CD8-positive, alpha-beta T cell (primary cell): ENCODE measurements at regions of chr1 and their contacts with region 1.

Region 1: GRCh38 chr1:109620841-109621286 is 1.2 kb downstream of the AMPD2 start:
- DNase-seq: peak; percentile 91 to 99 (median 97)
- ATAC-seq: peak; percentile 87
- H3K4me3 ChIP-seq: peak overlapping the region; percentile 90 to 92
- H3K4me3 Mint-ChIP-seq: peak overlapping the region; percentile 98
- H3K27ac ChIP-seq: peak overlapping the region; percentile 86 to 91
- H3K27ac Mint-ChIP-seq: peak overlapping the region; percentile 97
- H3K4me1 ChIP-seq: peaks cover 50% of the 10 kb centered on the region
- H3K4me1 Mint-ChIP-seq: peaks cover 64% of the 10 kb centered on the region
- H3K27me3 ChIP-seq: no peaks in the 10 kb centered on the region
- H3K27me3 Mint-ChIP-seq: no peaks in the 10 kb centered on the region
- CTCF ChIP-seq: no peak

Region 2: GRCh38 chr1:109493805-109494539 is 126.9 kb before region 1 on chr1 and contains the start of gene CYB561D1:
- CTCF ChIA-PET with region 1: interaction called, 6 read pairs
- POLR2A ChIA-PET with region 1: no interaction called
- intact Hi-C with region 1: loop called (anchors 5 kb)
- DNase-seq: peak; percentile 79 to 95 (median 88)
- ATAC-seq: peak; percentile 90
- H3K4me3 ChIP-seq: peak within 1 kb of the TSS; percentile 94 to 95
- H3K4me3 Mint-ChIP-seq: peak within 1 kb of the TSS; percentile 95
- H3K27ac ChIP-seq: peak within 1 kb of the TSS; percentile 53 to 58
- H3K27ac Mint-ChIP-seq: peak within 1 kb of the TSS; percentile 85
- H3K4me1 ChIP-seq: peaks cover 49% of the 10 kb centered on the region
- H3K4me1 Mint-ChIP-seq: peaks cover 52% of the 10 kb centered on the region
- H3K27me3 ChIP-seq: no peaks in the 10 kb centered on the region
- H3K27me3 Mint-ChIP-seq: no peaks in the 10 kb centered on the region
- CTCF ChIP-seq: peak; percentile 88
- total RNA-seq, gene CYB561D1: 10.2 to 12.3 TPM

Region 3: GRCh38 chr1:109499661-109500536 is 121.0 kb before region 1 on chr1:
- CTCF ChIA-PET with region 1: interaction called, 6 read pairs
- POLR2A ChIA-PET with region 1: interaction called, 3 read pairs
- intact Hi-C with region 1: loop called in 1 of 2 experiments (anchors 5 kb)
- DNase-seq: peak; percentile 34 to 81 (median 74)
- ATAC-seq: peak; percentile 16
- H3K4me3 ChIP-seq: no peak overlapping the region
- H3K4me3 Mint-ChIP-seq: peak overlapping the region; percentile 63
- H3K27ac ChIP-seq: peak overlapping the region; percentile 85 to 94
- H3K27ac Mint-ChIP-seq: peak overlapping the region; percentile 97
- H3K4me1 ChIP-seq: peaks cover 94% of the 10 kb centered on the region
- H3K4me1 Mint-ChIP-seq: peaks cover 89% of the 10 kb centered on the region
- H3K27me3 ChIP-seq: no peaks in the 10 kb centered on the region
- H3K27me3 Mint-ChIP-seq: no peaks in the 10 kb centered on the region
- CTCF ChIP-seq: peak; percentile 59

Region 4: GRCh38 chr1:109687616-109688499 is 67.0 kb after region 1 on chr1 and contains the start of gene GSTM1:
- CTCF ChIA-PET with region 1: interaction called, 3 read pairs
- POLR2A ChIA-PET with region 1: no interaction called
- intact Hi-C with region 1: loop called in 1 of 2 experiments (anchors 5 kb)
- DNase-seq: peak in 5 of 9 experiments; percentile 46 to 92 (median 85)
- ATAC-seq: peak; percentile 98
- H3K4me3 ChIP-seq: peak within 1 kb of the TSS; percentile 60 to 63
- H3K4me3 Mint-ChIP-seq: peak within 1 kb of the TSS; percentile 87
- H3K27ac ChIP-seq: peak within 1 kb of the TSS; percentile 43 to 53
- H3K27ac Mint-ChIP-seq: peak within 1 kb of the TSS; percentile 91
- H3K4me1 ChIP-seq: no peaks in the 10 kb centered on the region
- H3K4me1 Mint-ChIP-seq: peaks cover 8% of the 10 kb centered on the region
- H3K27me3 ChIP-seq: no peaks in the 10 kb centered on the region
- H3K27me3 Mint-ChIP-seq: no peaks in the 10 kb centered on the region
- CTCF ChIP-seq: no peak
- total RNA-seq, gene GSTM1: 11.5 to 14.0 TPM

Region 5: DNA sequence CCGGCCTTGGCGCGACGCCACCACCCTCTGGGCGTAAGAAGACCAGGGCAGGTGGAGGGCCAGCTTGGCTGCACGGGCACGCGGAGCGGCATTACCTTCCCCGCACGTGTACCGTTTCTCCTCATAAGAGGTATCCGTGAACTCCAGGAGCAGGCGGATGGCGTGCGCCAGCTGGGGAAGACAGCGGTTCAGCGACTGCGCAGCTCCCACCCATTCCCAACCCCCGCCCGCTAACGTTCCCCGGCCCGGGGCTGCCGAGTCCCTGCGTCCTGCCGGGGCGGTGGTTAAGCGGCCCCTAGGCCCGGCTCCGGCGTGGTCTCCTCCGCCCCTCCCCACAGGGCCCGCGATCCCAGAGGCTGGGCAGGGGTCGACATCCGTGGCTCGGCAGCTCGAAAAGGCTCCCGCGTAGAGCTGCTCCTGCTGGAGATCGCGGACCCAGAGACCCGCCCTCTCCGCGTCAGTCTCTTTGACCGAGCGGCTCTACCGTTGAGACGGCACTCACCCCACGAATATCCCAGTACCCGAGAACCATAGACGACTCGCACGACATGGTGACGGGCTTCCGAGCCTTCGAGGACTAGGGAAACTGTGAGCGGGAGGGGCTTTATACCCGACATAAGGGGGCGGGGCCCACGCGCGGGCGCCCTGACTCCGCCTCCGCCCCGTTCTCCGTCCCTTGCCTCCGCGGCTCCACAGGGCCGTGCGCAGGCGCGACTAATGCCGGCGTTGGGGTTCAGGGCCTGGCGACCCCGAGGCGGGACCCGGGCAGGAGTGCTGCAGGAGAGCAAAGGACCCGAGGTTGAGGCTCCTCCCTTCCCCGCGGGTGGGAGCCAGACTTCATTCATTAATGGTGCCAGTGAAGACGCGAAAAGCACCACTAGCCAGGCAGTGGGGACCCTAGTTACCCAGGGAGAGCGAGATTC is 119.1 kb after region 1 on chr1:
- CTCF ChIA-PET with region 1: no interaction called
- POLR2A ChIA-PET with region 1: no interaction called
- intact Hi-C with region 1: loop called in 1 of 2 experiments (anchors 1 kb)
- DNase-seq: peak; percentile 59 to 91 (median 82)
- ATAC-seq: peak; percentile 97
- H3K4me3 ChIP-seq: peak overlapping the region; percentile 76 to 82
- H3K4me3 Mint-ChIP-seq: peak overlapping the region; percentile 92
- H3K27ac ChIP-seq: peak overlapping the region; percentile 49 to 58
- H3K27ac Mint-ChIP-seq: peak overlapping the region; percentile 89
- H3K4me1 ChIP-seq: peaks cover 13% of the 10 kb centered on the region
- H3K4me1 Mint-ChIP-seq: peaks cover 15% of the 10 kb centered on the region
- H3K27me3 ChIP-seq: peaks cover 0 to 2% of the 10 kb centered on the region in 2 experiments
- H3K27me3 Mint-ChIP-seq: peaks cover 3% of the 10 kb centered on the region
- CTCF ChIP-seq: no peak